Naive thymus-derived CD4-positive, alpha-beta T cell (primary cell): ENCODE measurements at regions of chr15 and their contacts with region 1.

Region 1: GRCh38 chr15:58770857-58771620 is at the start of gene MINDY2:
- DNase-seq: peak; percentile 85 to 92 (median 90)
- ATAC-seq: peak; percentile 98
- H3K4me3 ChIP-seq: peak within 1 kb of the TSS; percentile 83
- H3K4me3 Mint-ChIP-seq: peak within 1 kb of the TSS in 2 of 10 donors; percentile 2 to 20
- H3K27ac ChIP-seq: peak within 1 kb of the TSS; percentile 90
- H3K27ac Mint-ChIP-seq: peak within 1 kb of the TSS in 7 of 9 donors; percentile 86 to 96 (median 93)
- H3K4me1 ChIP-seq: peaks cover 24 to 32% of the 10 kb centered on the region in 2 donors
- H3K4me1 Mint-ChIP-seq: peaks cover 0 to 21% (median 9%) of the 10 kb centered on the region in 7 donors
- H3K27me3 ChIP-seq: no peaks in the 10 kb centered on the region
- H3K27me3 Mint-ChIP-seq: no peaks in the 10 kb centered on the region
- total RNA-seq, gene MINDY2: 10.4 to 16.6 (median 11.5) TPM

Region 2: DNA sequence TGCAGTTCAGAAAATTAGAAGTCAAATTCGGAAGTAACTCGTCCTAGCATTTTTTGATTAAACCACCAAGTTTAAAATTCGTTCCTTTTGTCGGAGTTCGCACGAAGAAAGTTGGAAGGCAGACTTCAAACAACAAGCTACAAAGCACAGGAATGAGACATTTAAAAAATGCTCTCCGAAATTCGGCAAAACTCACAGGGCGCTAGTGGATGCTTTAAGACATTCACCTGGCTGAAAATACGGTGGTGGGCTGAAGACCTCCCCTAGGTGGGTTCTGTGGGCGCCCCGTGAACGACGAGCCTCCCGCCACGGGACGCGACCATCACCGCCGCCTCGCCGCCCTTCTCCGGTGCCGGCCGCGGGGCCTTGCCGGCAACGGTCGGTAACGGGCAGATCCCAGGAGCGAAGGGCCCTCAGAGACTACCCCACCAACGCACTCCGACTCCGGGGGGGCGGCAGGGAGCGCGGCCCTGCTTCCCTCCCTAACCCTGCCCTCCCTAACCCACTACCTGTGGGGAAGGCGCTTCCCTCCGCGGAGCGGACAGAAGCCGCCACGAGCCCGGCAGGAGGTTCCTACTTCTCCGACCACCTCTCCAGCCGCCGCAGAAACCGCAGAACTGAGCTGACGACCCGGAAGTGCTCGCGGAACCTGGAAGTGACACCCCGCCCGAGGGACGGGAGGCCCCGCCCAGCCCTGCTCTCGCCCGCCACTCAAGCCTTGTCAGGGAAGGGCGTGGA is 886.0 kb after region 1 on chr15 and contains the start of gene GTF2A2:
- CTCF ChIA-PET with region 1: no interaction called
- POLR2A ChIA-PET with region 1: no interaction called
- intact Hi-C with region 1: loop called in 1 of 2 experiments (anchors 1 kb)
- DNase-seq: peak; percentile 81 to 95 (median 89)
- ATAC-seq: peak; percentile 99
- H3K4me3 ChIP-seq: peak within 1 kb of the TSS; percentile 77
- H3K4me3 Mint-ChIP-seq: peak within 1 kb of the TSS in 7 of 10 donors; percentile 18 to 52 (median 26)
- H3K27ac ChIP-seq: peak within 1 kb of the TSS; percentile 89
- H3K27ac Mint-ChIP-seq: peak within 1 kb of the TSS in 4 of 9 donors; percentile 76 to 88 (median 78)
- H3K4me1 ChIP-seq: peaks cover 18% of the 10 kb centered on the region in 2 donors
- H3K4me1 Mint-ChIP-seq: peaks cover 4 to 17% (median 11%) of the 10 kb centered on the region in 7 donors
- H3K27me3 ChIP-seq: no peaks in the 10 kb centered on the region
- H3K27me3 Mint-ChIP-seq: no peaks in the 10 kb centered on the region
- total RNA-seq, gene GTF2A2: 46.6 to 124 (median 50.1) TPM